Natural killer cell (primary cell): ENCODE measurements at regions of chr6 and their contacts with region 1.

Region 1: GRCh38 chr6:41545703-41546474 is at the start of gene FOXP4:
- DNase-seq: peak; percentile 56 to 92
- ATAC-seq: peak; percentile 77 to 90 (median 81)
- H3K4me3 ChIP-seq: peak within 1 kb of the TSS; percentile 59
- H3K4me3 Mint-ChIP-seq: peak within 1 kb of the TSS; percentile 94
- H3K27ac ChIP-seq: no peak within 1 kb of the TSS
- H3K27ac Mint-ChIP-seq: peak within 1 kb of the TSS; percentile 50 to 81
- H3K4me1 ChIP-seq: peaks cover 43% of the 10 kb centered on the region
- H3K4me1 Mint-ChIP-seq: peaks cover 30 to 42% of the 10 kb centered on the region in 2 donors
- H3K27me3 ChIP-seq: peaks cover 15% of the 10 kb centered on the region
- H3K27me3 Mint-ChIP-seq: peaks cover 0 to 12% of the 10 kb centered on the region in 2 donors
- CTCF ChIP-seq: no peak
- total RNA-seq, gene FOXP4: 11.2 to 21.1 (median 14.7) TPM

Region 2: GRCh38 chr6:41442800-41443501 is 102.9 kb before region 1 on chr6:
- intact Hi-C with region 1: no loop called
- DNase-seq: peak in 1 of 2 donors; percentile 55
- ATAC-seq: peak in 1 of 3 donors; percentile 23
- H3K4me3 ChIP-seq: no peak overlapping the region
- H3K4me3 Mint-ChIP-seq: peak overlapping the region; percentile 13
- H3K27ac ChIP-seq: peak overlapping the region; percentile 51
- H3K27ac Mint-ChIP-seq: no peak overlapping the region
- H3K4me1 ChIP-seq: peaks cover 53% of the 10 kb centered on the region
- H3K4me1 Mint-ChIP-seq: peaks cover 33 to 39% of the 10 kb centered on the region in 2 donors
- H3K27me3 ChIP-seq: peaks cover 34% of the 10 kb centered on the region
- H3K27me3 Mint-ChIP-seq: peaks cover 72 to 78% of the 10 kb centered on the region in 2 donors
- CTCF ChIP-seq: peak; percentile 39

Region 3: GRCh38 chr6:41531591-41532582 is 14.0 kb before region 1 on chr6:
- intact Hi-C with region 1: loop called (anchors 2 kb)
- DNase-seq: peak; percentile 51 to 70
- ATAC-seq: peak; percentile 70 to 81 (median 79)
- H3K4me3 ChIP-seq: peak overlapping the region; percentile 12
- H3K4me3 Mint-ChIP-seq: peak overlapping the region; percentile 92
- H3K27ac ChIP-seq: peak overlapping the region; percentile 59
- H3K27ac Mint-ChIP-seq: peak overlapping the region; percentile 92 to 95
- H3K4me1 ChIP-seq: peaks cover 36% of the 10 kb centered on the region
- H3K4me1 Mint-ChIP-seq: peaks cover 32% of the 10 kb centered on the region in 2 donors
- H3K27me3 ChIP-seq: no peaks in the 10 kb centered on the region
- H3K27me3 Mint-ChIP-seq: peaks cover 27 to 34% of the 10 kb centered on the region in 2 donors
- CTCF ChIP-seq: no peak